ENCODE measurements at regions of chr16 and their contacts with region 1.

Region 1: DNA sequence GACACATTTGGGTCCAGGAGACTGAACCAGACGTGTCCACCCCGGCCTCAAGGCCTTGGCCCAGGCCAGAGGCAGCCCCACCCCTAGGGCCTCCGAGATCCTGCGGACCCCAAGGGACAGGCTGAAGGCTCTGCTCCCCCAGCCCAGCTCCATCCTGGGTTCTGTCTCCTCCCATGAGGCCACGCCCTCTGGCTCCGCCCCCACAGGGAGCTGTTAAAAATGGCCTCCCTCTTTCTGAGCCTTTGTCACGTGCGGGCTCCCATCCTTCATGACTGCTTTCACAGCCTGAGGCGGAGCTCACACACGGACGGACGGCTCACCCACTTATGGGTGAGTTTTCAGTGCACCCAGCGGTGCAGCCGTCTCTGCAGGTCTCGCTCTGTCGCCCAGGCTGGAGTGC is 6.5 kb upstream of the CACNA1H start:
- DNase-seq: no peak

Region 2: GRCh38 chr16:1113889-1114526 is 32.4 kb before region 1 on chr16:
- intact Hi-C with region 1: loop called in 1 of 2 experiments (anchors 5 kb)
- DNase-seq: no peak

Region 3: GRCh38 chr16:1167276-1168107 is 21.1 kb after region 1 on chr16:
- intact Hi-C with region 1: no loop called
- DNase-seq: no peak

Region 4: GRCh38 chr16:1180549-1181403 is 34.4 kb after region 1 on chr16:
- intact Hi-C with region 1: no loop called
- DNase-seq: peak; percentile 87

Region 5: GRCh38 chr16:1308977-1309885 is 162.8 kb after region 1 on chr16 and contains the start of gene UBE2I:
- intact Hi-C with region 1: no loop called
- DNase-seq: peak; percentile 99
- total RNA-seq, gene UBE2I: 68.0 to 68.4 TPM

Region 6: DNA sequence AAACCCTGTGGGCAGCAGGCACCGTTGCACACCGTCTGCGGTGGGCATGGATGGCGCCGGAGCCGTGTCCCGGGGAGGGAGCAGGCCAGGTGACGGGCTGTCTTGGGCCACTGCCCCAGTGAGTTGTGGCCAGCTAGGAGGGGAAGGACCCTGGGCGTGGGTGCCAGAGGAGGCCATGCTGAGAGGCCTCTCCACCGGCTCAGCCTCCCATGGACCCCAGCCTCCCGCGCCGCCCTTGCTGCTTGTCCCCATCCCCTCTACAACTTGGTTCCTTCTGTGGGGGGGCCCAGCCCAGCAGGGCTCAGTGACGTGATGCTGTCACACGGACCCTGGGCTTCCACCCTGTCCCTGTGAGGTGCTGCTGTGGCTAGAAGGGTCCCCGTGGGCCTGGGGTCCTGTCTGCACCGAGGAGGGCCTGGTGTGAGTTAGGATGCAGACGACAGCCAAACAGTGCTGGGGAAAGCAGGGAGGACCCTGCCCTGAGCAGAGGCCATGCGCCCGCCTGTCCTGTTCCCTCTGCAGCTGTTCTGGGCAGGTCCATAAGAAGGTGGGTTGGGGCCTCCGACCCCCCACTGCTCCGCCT is 174.3 kb after region 1 on chr16:
- intact Hi-C with region 1: no loop called
- DNase-seq: no peak